ENCODE measurements at regions of chr3 and their contacts with region 1.

Region 1: DNA sequence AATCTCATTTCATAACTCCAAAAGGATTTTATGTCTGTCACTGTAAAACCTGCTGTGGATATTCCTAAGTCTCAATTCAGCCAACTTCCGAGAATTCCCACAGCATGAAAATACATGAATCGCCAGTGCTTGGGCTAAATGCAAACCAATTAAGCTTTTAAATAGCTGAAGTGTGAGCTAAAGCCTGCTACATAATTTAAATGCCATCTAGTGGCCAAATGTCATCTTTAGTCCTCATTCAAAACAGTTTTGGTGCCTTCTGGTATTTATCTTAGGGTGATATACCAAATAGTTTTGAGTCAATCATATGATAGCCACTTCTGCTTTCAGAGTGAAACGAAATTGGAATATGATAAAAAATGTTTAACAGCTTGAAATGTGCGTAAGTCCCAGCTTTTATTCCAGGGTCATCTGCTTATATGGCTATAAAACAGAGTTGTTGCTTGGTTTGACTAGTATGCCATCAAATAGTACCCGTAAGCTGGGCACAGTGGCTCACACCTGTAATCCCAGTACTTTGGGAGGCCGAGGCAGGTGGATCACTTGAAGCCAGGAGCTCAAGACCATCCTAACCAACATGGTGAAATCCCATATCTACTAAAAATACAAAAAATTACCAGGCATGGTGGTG is 41.8 kb upstream of the CCNL1 start:
- DNase-seq: peak; percentile 58
- H3K4me3 Mint-ChIP-seq: no peak overlapping the region
- H3K27ac Mint-ChIP-seq: no peak overlapping the region
- H3K4me1 Mint-ChIP-seq: no peaks in the 10 kb centered on the region
- H3K27me3 Mint-ChIP-seq: peaks cover 5% of the 10 kb centered on the region

Region 2: GRCh38 chr3:156808025-156808424 is 393.7 kb before region 1 on chr3:
- intact Hi-C with region 1: no loop called
- DNase-seq: no peak
- H3K4me3 Mint-ChIP-seq: no peak overlapping the region
- H3K27ac Mint-ChIP-seq: no peak overlapping the region
- H3K4me1 Mint-ChIP-seq: peaks cover 32% of the 10 kb centered on the region
- H3K27me3 Mint-ChIP-seq: no peaks in the 10 kb centered on the region

Region 3: GRCh38 chr3:157190388-157190872 is 11.3 kb before region 1 on chr3:
- intact Hi-C with region 1: no loop called
- DNase-seq: no peak
- H3K4me3 Mint-ChIP-seq: no peak overlapping the region
- H3K27ac Mint-ChIP-seq: no peak overlapping the region
- H3K4me1 Mint-ChIP-seq: no peaks in the 10 kb centered on the region
- H3K27me3 Mint-ChIP-seq: peaks cover 3% of the 10 kb centered on the region

Region 4: DNA sequence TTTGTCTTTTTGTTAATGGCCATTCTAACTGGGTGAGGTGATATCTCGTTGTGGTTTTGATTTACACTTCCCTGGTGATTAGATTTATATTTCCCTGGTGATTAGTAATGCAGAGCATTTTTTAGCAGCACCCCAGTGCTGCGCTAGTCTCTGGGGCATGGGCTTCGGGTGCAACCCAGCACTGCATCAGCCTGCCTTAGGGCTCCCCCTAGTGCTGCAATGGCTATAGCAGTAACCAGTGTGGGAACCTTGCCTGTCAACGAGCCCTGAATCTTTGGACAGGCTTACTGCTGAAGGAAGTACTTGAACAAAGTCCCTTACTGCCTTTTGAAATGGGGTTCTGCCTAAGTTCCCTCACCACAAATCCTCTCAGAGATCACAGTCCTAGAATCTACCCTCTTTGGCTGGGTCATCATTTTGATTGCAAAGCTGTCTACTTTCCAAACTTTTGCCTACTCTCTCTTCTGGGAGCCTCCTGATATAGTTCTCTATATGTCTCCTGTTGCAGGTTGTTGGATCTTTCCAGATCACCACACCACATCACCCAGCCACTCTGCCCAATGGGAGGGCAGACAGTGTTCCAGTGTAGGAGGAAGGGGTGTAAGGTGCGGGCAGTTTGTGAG is 37.4 kb after region 1 on chr3:
- intact Hi-C with region 1: loop called (anchors 1 kb)
- DNase-seq: peak; percentile 93
- H3K4me3 Mint-ChIP-seq: no peak overlapping the region
- H3K27ac Mint-ChIP-seq: no peak overlapping the region
- H3K4me1 Mint-ChIP-seq: peaks cover 3% of the 10 kb centered on the region
- H3K27me3 Mint-ChIP-seq: peaks cover 2% of the 10 kb centered on the region

Region 5: DNA sequence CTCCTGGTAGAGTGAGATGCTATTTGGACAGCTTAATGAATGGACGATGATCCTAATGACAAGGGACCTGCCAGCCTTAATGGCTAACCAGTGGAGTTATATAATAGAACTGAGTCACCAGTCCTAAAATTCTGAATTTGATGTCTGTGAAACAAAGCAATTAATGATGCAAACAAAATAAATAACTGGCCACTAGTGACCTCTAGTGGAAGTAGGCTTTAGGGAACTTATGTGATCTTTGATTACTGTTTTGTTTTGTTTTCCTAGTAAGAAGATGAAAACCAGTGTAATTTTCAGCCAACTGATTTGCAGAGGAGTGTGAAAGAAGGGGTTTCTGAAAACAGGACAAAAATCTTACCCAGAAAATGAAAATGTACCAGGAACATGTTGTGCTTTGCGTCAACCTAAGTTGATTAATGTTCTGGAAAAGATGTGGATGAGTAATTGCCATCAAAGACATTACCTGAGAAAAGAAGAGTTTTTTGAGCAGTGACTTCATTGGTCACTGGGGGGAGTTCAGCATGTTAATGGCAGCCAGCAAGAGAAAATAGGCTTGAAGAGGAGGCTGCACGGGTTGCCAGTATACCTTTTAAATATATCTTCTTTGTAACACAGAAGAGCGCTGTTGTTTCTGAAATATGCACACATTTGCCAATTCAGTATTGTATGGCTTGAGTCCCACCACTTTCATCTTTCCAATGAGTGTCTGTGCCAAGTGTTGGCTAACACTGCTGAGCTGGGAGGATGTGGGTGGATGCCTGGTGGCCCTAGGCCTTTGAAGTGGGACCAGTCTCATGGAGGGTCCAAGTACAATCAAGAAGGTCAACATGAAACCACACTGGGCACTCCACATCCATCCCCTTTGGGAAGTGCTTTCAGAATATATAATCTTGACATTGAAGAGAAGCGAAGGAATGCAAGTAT is 292.1 kb after region 1 on chr3:
- intact Hi-C with region 1: loop called (anchors 10 kb)
- DNase-seq: no peak
- H3K4me3 Mint-ChIP-seq: no peak overlapping the region
- H3K27ac Mint-ChIP-seq: no peak overlapping the region
- H3K4me1 Mint-ChIP-seq: no peaks in the 10 kb centered on the region
- H3K27me3 Mint-ChIP-seq: peaks cover 26% of the 10 kb centered on the region

Region 6: DNA sequence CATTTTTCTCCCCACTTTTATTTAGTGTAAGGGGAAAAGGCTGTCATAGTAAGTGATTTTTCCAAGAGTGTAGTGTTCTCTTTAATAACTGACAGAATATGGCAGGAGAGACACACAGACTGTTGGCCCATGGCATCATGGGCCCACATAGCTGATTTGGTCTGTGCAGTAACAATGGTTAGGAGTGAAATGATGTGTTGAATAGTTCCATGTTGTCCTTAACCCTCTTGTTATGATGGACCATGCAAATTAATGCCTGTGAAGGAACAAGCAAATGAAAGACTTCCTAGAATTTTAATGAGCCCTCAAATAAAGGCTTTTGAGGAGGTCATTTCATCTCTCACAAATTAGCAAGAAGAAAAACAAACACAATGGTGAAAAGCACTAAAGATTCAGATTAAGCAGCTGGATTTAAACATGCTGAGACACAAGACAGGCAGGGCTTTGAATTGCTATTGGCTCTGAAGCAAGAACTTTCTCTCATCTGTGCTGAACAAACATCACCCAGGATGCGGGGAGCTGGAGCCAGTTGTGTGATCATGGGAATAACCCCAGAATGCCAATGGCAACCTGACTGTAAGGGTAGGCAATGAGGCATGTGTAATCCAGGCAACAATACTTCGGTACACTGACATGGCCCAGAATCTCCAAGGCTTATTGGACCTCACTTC is 438.1 kb after region 1 on chr3:
- intact Hi-C with region 1: no loop called
- DNase-seq: no peak
- H3K4me3 Mint-ChIP-seq: no peak overlapping the region
- H3K27ac Mint-ChIP-seq: no peak overlapping the region
- H3K4me1 Mint-ChIP-seq: no peaks in the 10 kb centered on the region
- H3K27me3 Mint-ChIP-seq: no peaks in the 10 kb centered on the region

Measured in activated CD4-positive, alpha-beta T cell treated with anti-CD3 and anti-CD28 coated beads, Interleukin-2, amount 10 ng/mL, durations not matched to agents 24 days and 14 days (primary cell).